Natural killer cell (primary cell): ENCODE measurements at regions of chr3 and their contacts with region 1.

Region 1: DNA sequence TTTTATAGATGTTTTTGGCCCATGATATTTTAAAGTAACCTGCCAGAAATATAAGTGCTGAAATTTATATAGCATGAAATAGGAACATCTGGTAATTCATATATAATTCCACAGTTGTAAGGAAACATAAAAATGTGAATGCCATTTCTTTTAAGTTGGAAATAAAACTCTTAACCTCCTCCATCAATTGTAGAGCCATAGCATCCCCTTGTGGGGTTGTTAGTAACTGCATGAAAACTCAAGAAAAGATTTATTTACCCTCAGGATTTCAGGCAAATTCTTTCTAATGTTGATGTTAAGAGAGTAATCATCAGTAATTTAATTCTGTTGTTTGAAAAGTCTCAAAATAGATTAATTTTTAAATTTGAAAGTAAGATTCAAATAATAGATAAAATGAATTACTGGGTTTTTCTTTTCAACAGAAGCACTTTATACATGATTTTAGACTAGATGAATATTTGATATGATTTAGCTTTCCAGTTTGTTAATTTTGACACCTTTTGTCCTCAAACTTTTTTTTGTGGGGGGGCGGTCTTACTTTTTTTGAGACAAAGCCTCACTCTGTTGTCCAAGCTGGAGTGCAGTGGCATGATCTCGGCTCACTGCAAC is 74.7 kb downstream of the RASA2 start:
- DNase-seq: peak in 1 of 2 donors; percentile 87
- ATAC-seq: peak; percentile 73 to 85 (median 77)
- H3K4me3 ChIP-seq: no peak overlapping the region
- H3K4me3 Mint-ChIP-seq: no peak overlapping the region
- H3K27ac ChIP-seq: no peak overlapping the region
- H3K27ac Mint-ChIP-seq: peak overlapping the region; percentile 39 to 79
- H3K4me1 ChIP-seq: no peaks in the 10 kb centered on the region
- H3K4me1 Mint-ChIP-seq: peaks cover 19% of the 10 kb centered on the region in 2 donors
- H3K27me3 ChIP-seq: no peaks in the 10 kb centered on the region
- H3K27me3 Mint-ChIP-seq: no peaks in the 10 kb centered on the region
- CTCF ChIP-seq: peak; percentile 100

Region 2: GRCh38 chr3:141212555-141212954 is 349.0 kb before region 1 on chr3:
- intact Hi-C with region 1: no loop called
- DNase-seq: no peak
- ATAC-seq: no peak
- H3K4me3 ChIP-seq: no peak overlapping the region
- H3K4me3 Mint-ChIP-seq: no peak overlapping the region
- H3K27ac ChIP-seq: no peak overlapping the region
- H3K27ac Mint-ChIP-seq: no peak overlapping the region
- H3K4me1 ChIP-seq: no peaks in the 10 kb centered on the region
- H3K4me1 Mint-ChIP-seq: no peaks in the 10 kb centered on the region
- H3K27me3 ChIP-seq: no peaks in the 10 kb centered on the region
- H3K27me3 Mint-ChIP-seq: peaks cover 3 to 6% of the 10 kb centered on the region in 2 donors
- CTCF ChIP-seq: no peak

Region 3: DNA sequence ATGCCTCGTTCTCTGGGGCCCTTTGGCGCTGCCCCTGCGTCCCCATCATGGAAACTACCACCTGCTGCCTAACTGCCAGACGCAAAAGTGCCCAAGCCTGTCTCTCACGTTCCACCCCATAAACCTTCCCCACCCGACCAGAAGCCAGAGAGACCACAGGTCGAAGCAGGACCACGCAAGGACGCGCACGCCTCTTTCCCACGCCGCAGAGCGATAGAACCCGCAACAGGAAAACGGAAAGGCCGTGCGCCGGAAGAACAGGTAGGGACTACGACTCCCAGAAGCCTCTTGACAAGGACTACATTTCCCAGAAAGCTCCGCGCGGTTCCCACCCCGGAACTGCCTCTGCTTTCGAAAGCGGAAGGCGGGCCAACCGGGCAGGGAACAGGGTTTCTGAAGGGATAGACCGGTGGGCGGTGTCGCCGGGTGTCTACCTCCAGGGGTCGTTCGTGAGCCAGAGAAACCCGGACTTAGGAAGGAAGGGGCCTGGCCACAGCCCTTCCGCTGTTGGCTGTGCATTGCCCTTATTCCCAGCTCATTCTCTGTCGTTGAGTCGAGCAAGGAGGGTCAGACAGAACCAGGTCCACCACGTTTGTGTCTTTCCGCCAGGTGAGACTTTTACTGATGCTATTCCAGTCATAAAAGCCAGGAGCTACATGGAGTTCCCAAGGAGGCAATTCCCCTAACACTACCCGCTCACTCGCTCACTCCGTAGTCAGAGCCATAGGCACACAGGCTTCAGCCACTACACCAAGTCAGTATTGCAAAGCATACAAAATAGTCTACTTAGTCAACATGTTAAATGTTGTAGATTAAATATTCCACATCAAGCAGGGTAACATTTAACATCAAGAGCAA is 249.8 kb before region 1 on chr3:
- intact Hi-C with region 1: loop called (anchors 2 kb)
- DNase-seq: peak; percentile 93 to 98
- ATAC-seq: peak; percentile 96 to 99 (median 98)
- H3K4me3 ChIP-seq: peak overlapping the region; percentile 64
- H3K4me3 Mint-ChIP-seq: peak overlapping the region; percentile 100
- H3K27ac ChIP-seq: peak overlapping the region; percentile 81
- H3K27ac Mint-ChIP-seq: peak overlapping the region; percentile 96 to 98
- H3K4me1 ChIP-seq: peaks cover 20% of the 10 kb centered on the region
- H3K4me1 Mint-ChIP-seq: peaks cover 30 to 31% of the 10 kb centered on the region in 2 donors
- H3K27me3 ChIP-seq: no peaks in the 10 kb centered on the region
- H3K27me3 Mint-ChIP-seq: no peaks in the 10 kb centered on the region
- CTCF ChIP-seq: peak; percentile 48

Region 4: GRCh38 chr3:141360888-141361598 is 200.5 kb before region 1 on chr3:
- intact Hi-C with region 1: loop called (anchors 5 kb)
- DNase-seq: peak in 1 of 2 donors; percentile 73
- ATAC-seq: peak; percentile 62 to 67 (median 65)
- H3K4me3 ChIP-seq: no peak overlapping the region
- H3K4me3 Mint-ChIP-seq: no peak overlapping the region
- H3K27ac ChIP-seq: no peak overlapping the region
- H3K27ac Mint-ChIP-seq: no peak overlapping the region
- H3K4me1 ChIP-seq: peaks cover 5% of the 10 kb centered on the region
- H3K4me1 Mint-ChIP-seq: peaks cover 10% of the 10 kb centered on the region in 2 donors
- H3K27me3 ChIP-seq: no peaks in the 10 kb centered on the region
- H3K27me3 Mint-ChIP-seq: peaks cover 12 to 16% of the 10 kb centered on the region in 2 donors
- CTCF ChIP-seq: peak; percentile 56

Region 5: GRCh38 chr3:141477224-141477623 is 84.3 kb before region 1 on chr3:
- intact Hi-C with region 1: loop called (anchors 1 kb)
- DNase-seq: no peak
- ATAC-seq: peak in 1 of 3 donors; percentile 17
- H3K4me3 ChIP-seq: no peak overlapping the region
- H3K4me3 Mint-ChIP-seq: no peak overlapping the region
- H3K27ac ChIP-seq: no peak overlapping the region
- H3K27ac Mint-ChIP-seq: no peak overlapping the region
- H3K4me1 ChIP-seq: peaks cover 32% of the 10 kb centered on the region
- H3K4me1 Mint-ChIP-seq: peaks cover 41 to 42% of the 10 kb centered on the region in 2 donors
- H3K27me3 ChIP-seq: no peaks in the 10 kb centered on the region
- H3K27me3 Mint-ChIP-seq: peaks cover 0 to 2% of the 10 kb centered on the region in 2 donors
- CTCF ChIP-seq: no peak

Region 6: GRCh38 chr3:141619450-141619849 is 57.9 kb after region 1 on chr3:
- intact Hi-C with region 1: no loop called
- DNase-seq: no peak
- ATAC-seq: no peak
- H3K4me3 ChIP-seq: no peak overlapping the region
- H3K4me3 Mint-ChIP-seq: no peak overlapping the region
- H3K27ac ChIP-seq: no peak overlapping the region
- H3K27ac Mint-ChIP-seq: peak overlapping the region in 1 of 2 donors; percentile 3
- H3K4me1 ChIP-seq: no peaks in the 10 kb centered on the region
- H3K4me1 Mint-ChIP-seq: no peaks in the 10 kb centered on the region
- H3K27me3 ChIP-seq: no peaks in the 10 kb centered on the region
- H3K27me3 Mint-ChIP-seq: no peaks in the 10 kb centered on the region
- CTCF ChIP-seq: no peak